ENCODE measurements at regions of chr7 and their contacts with region 1.

Region 1: GRCh38 chr7:114026486-114027089 is 107.8 kb upstream of the PPP1R3A start:
- DNase-seq: peak; percentile 22
- H3K4me3 ChIP-seq: no peak overlapping the region
- H3K27ac ChIP-seq: no peak overlapping the region
- H3K4me1 ChIP-seq: no peaks in the 10 kb centered on the region
- H3K27me3 ChIP-seq: peaks cover 2% of the 10 kb centered on the region
- CTCF ChIP-seq: peak; percentile 48 to 58

Region 2: GRCh38 chr7:114217026-114217425 is 190.4 kb after region 1 on chr7:
- CTCF ChIA-PET with region 1: no interaction called
- dilution Hi-C with region 1: no loop called
- in situ Hi-C with region 1: no loop called
- intact Hi-C with region 1: loop called (anchors 5 kb)
- DNase-seq: no peak
- H3K4me3 ChIP-seq: no peak overlapping the region
- H3K27ac ChIP-seq: no peak overlapping the region
- H3K4me1 ChIP-seq: no peaks in the 10 kb centered on the region
- H3K27me3 ChIP-seq: no peaks in the 10 kb centered on the region
- CTCF ChIP-seq: peak; percentile 7 to 39

Region 3: GRCh38 chr7:114539575-114539974 is 513.0 kb after region 1 on chr7:
- CTCF ChIA-PET with region 1: no interaction called
- dilution Hi-C with region 1: no loop called
- in situ Hi-C with region 1: no loop called
- intact Hi-C with region 1: loop called (anchors 5 kb)
- DNase-seq: no peak
- H3K4me3 ChIP-seq: no peak overlapping the region
- H3K27ac ChIP-seq: no peak overlapping the region
- H3K4me1 ChIP-seq: no peaks in the 10 kb centered on the region
- H3K27me3 ChIP-seq: no peaks in the 10 kb centered on the region
- CTCF ChIP-seq: peak; percentile 15 to 46

Region 4: GRCh38 chr7:114663502-114663901 is 636.9 kb after region 1 on chr7:
- CTCF ChIA-PET with region 1: no interaction called
- dilution Hi-C with region 1: no loop called
- in situ Hi-C with region 1: no loop called
- intact Hi-C with region 1: loop called (anchors 2 kb)
- DNase-seq: peak; percentile 3
- H3K4me3 ChIP-seq: no peak overlapping the region
- H3K27ac ChIP-seq: no peak overlapping the region
- H3K4me1 ChIP-seq: no peaks in the 10 kb centered on the region
- H3K27me3 ChIP-seq: no peaks in the 10 kb centered on the region
- CTCF ChIP-seq: peak in 1 of 2 donors; percentile 37

Region 5: GRCh38 chr7:115851291-115851690 is 1824.7 kb after region 1 on chr7:
- CTCF ChIA-PET with region 1: no interaction called
- dilution Hi-C with region 1: no loop called
- in situ Hi-C with region 1: no loop called
- intact Hi-C with region 1: loop called (anchors 10 kb)
- DNase-seq: peak; percentile 14
- H3K4me3 ChIP-seq: no peak overlapping the region
- H3K27ac ChIP-seq: no peak overlapping the region
- H3K4me1 ChIP-seq: no peaks in the 10 kb centered on the region
- H3K27me3 ChIP-seq: peaks cover 3% of the 10 kb centered on the region
- CTCF ChIP-seq: peak; percentile 33 to 43